ENCODE measurements at regions of chr21 and their contacts with region 1.

Region 1: DNA sequence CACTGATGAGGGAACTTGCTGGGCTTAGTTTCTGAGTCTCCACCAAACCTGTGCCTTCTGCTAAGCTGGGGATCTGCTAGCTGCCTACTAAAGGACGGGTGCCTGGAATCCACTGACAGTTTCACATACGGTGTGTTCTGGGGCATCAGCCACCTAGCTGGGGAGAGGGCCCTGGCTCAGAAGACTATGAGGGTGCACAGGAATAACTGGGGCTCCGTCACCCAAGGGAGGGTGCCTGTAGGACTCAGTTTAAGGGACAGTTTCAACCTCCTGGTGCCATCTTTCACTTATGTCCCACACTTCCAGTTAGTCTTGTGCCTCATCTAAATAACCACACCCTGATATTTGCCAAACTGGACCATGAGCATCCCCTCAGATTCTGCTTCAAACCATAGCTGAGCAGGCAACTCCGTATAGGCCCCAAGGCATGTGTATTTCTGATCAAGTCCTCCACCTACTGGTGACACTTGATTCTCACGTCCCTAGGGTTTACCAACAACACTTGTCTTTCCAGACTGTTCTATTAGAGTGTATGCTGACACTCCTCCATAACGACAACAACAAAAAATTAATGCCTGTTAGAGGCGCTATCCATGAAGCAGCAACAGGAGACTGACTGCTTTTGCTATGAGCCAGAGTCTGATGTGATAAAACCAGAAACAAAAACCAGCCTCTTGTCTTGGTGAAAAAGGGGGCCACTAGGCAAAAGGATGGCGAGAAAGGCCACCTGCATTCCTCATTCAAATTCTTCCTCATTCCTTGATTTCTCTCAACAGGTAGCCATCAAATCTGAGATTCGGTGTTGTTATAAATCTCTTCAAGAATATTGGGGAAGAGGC is 55.0 kb upstream of the PAXBP1 start:
- DNase-seq: peak; percentile 72
- H3K4me3 ChIP-seq: no peak overlapping the region
- H3K27ac ChIP-seq: no peak overlapping the region
- H3K4me1 ChIP-seq: no peaks in the 10 kb centered on the region
- H3K27me3 ChIP-seq: peaks cover 3% of the 10 kb centered on the region
- CTCF ChIP-seq: peak; percentile 67

Region 2: DNA sequence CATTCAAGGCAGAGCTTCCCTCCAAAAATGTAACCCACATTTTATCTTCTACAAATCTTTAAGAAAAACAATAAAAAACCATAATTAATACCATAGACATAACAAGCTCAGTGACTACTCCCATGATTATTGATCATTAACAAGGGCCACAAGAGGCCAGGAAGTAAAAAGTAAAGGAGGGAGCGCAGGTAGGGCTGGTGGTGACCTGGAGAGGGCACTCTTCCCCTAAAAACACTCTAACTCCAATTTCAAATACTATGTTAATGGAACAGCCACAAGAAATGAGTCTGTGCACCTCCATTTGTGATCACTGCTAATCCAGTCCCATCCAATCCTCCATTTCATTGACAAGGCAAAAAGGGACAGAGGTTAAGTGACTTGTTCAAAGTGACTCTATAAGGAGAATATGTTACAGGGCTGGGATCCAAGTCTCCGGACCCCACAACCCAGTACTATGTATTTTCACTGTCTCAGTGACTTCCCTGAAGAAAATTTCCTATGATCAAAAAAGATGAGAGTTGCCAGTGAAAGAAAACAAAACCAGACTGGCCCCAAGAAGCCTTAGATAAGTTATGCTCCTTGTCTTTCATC is 173.1 kb before region 1 on chr21:
- CTCF ChIA-PET with region 1: no interaction called
- POLR2A ChIA-PET with region 1: no interaction called
- intact Hi-C with region 1: loop called (anchors 2 kb)
- DNase-seq: peak; percentile 37
- H3K4me3 ChIP-seq: no peak overlapping the region
- H3K27ac ChIP-seq: no peak overlapping the region
- H3K4me1 ChIP-seq: no peaks in the 10 kb centered on the region
- H3K27me3 ChIP-seq: no peaks in the 10 kb centered on the region
- CTCF ChIP-seq: peak; percentile 72

Region 3: GRCh38 chr21:32782698-32783097 is 43.9 kb before region 1 on chr21:
- CTCF ChIA-PET with region 1: interaction called, 5 read pairs
- POLR2A ChIA-PET with region 1: no interaction called
- intact Hi-C with region 1: loop called (anchors 5 kb)
- DNase-seq: peak; percentile 14
- H3K4me3 ChIP-seq: no peak overlapping the region
- H3K27ac ChIP-seq: no peak overlapping the region
- H3K4me1 ChIP-seq: no peaks in the 10 kb centered on the region
- H3K27me3 ChIP-seq: no peaks in the 10 kb centered on the region
- CTCF ChIP-seq: no peak; the same call in 1 of the 2 replicates